Activated CD4-positive, alpha-beta T cell treated with anti-CD3 and anti-CD28 coated beads for 36 hours (primary cell): ENCODE measurements at regions of chr10 and their contacts with region 1.

Region 1: DNA sequence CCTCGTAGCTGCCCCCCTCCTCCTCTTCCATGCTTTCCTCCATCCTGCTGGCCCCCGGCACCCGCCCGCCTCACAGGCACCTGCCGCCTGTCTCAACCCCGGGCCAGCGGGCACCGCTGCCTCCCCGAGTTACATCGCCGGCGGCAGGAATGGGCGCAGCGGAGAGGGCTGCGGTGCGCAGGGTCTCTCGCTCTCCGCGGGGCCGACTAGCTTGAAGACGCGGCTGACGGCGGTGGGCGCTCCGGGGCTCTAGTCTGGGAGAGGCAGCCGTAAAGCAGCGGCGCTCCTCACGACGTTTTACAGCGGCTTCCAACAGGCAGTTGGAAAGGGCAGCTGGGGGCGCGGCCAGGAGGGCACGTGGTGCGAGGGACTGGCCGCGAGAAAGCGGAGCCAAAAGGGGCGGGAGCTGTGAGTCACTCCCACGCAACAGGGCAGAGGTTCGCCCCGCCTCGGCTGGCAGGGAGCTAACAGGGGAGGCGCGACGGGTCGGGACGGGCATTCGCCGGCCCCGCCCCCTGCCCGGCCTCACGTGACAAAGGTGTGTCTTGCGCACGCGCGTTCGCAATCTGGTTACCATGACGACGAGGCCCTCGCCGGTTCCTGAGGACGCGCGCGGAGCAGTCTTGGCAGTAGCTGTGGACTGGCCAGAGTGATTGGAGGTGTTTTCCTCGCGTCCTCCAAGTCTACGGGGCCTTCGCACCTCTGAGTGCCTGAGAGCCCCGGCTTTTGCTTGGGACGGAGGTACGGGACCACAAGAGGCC is at the start of gene CACUL1:
- DNase-seq: peak; percentile 100
- ATAC-seq: peak; percentile 98
- H3K4me3 Mint-ChIP-seq: peak within 1 kb of the TSS; percentile 91
- H3K27ac Mint-ChIP-seq: peak within 1 kb of the TSS; percentile 83
- H3K4me1 Mint-ChIP-seq: peaks cover 33% of the 10 kb centered on the region
- H3K27me3 Mint-ChIP-seq: no peaks in the 10 kb centered on the region
- total RNA-seq, gene CACUL1: 20.1 to 24.4 TPM

Region 2: GRCh38 chr10:118046395-118047156 is 708.3 kb before region 1 on chr10 and contains the start of gene RAB11FIP2:
- CTCF ChIA-PET with region 1: no interaction called
- POLR2A ChIA-PET with region 1: no interaction called
- intact Hi-C with region 1: loop called in 1 of 2 experiments (anchors 2 kb)
- DNase-seq: peak; percentile 97
- ATAC-seq: peak; percentile 94
- H3K4me3 Mint-ChIP-seq: peak within 1 kb of the TSS; percentile 84
- H3K27ac Mint-ChIP-seq: peak within 1 kb of the TSS; percentile 88
- H3K4me1 Mint-ChIP-seq: peaks cover 28% of the 10 kb centered on the region
- H3K27me3 Mint-ChIP-seq: no peaks in the 10 kb centered on the region
- total RNA-seq, gene RAB11FIP2: 9.7 to 12.5 TPM

Region 3: GRCh38 chr10:118720685-118721538 is 34.0 kb before region 1 on chr10:
- CTCF ChIA-PET with region 1: interaction called, 14 read pairs
- POLR2A ChIA-PET with region 1: no interaction called
- intact Hi-C with region 1: no loop called
- DNase-seq: peak; percentile 69
- ATAC-seq: peak; percentile 71
- H3K4me3 Mint-ChIP-seq: no peak overlapping the region
- H3K27ac Mint-ChIP-seq: no peak overlapping the region
- H3K4me1 Mint-ChIP-seq: peaks cover 6% of the 10 kb centered on the region
- H3K27me3 Mint-ChIP-seq: no peaks in the 10 kb centered on the region

Region 4: GRCh38 chr10:119028900-119029612 is 274.2 kb after region 1 on chr10:
- CTCF ChIA-PET with region 1: no interaction called
- POLR2A ChIA-PET with region 1: no interaction called
- intact Hi-C with region 1: loop called in 1 of 2 experiments (anchors 1 kb)
- DNase-seq: peak; percentile 85
- ATAC-seq: peak; percentile 74
- H3K4me3 Mint-ChIP-seq: peak overlapping the region; percentile 47
- H3K27ac Mint-ChIP-seq: no peak overlapping the region
- H3K4me1 Mint-ChIP-seq: peaks cover 16% of the 10 kb centered on the region
- H3K27me3 Mint-ChIP-seq: no peaks in the 10 kb centered on the region

Region 5: GRCh38 chr10:119178372-119179119 is 423.6 kb after region 1 on chr10 and contains the start of gene PRDX3:
- CTCF ChIA-PET with region 1: no interaction called
- POLR2A ChIA-PET with region 1: no interaction called
- intact Hi-C with region 1: loop called in 1 of 2 experiments (anchors 1 kb)
- DNase-seq: peak; percentile 98
- ATAC-seq: peak; percentile 95
- H3K4me3 Mint-ChIP-seq: peak within 1 kb of the TSS; percentile 88
- H3K27ac Mint-ChIP-seq: peak within 1 kb of the TSS; percentile 95
- H3K4me1 Mint-ChIP-seq: peaks cover 36% of the 10 kb centered on the region
- H3K27me3 Mint-ChIP-seq: no peaks in the 10 kb centered on the region
- total RNA-seq, gene PRDX3: 160 to 217 TPM

Region 6: DNA sequence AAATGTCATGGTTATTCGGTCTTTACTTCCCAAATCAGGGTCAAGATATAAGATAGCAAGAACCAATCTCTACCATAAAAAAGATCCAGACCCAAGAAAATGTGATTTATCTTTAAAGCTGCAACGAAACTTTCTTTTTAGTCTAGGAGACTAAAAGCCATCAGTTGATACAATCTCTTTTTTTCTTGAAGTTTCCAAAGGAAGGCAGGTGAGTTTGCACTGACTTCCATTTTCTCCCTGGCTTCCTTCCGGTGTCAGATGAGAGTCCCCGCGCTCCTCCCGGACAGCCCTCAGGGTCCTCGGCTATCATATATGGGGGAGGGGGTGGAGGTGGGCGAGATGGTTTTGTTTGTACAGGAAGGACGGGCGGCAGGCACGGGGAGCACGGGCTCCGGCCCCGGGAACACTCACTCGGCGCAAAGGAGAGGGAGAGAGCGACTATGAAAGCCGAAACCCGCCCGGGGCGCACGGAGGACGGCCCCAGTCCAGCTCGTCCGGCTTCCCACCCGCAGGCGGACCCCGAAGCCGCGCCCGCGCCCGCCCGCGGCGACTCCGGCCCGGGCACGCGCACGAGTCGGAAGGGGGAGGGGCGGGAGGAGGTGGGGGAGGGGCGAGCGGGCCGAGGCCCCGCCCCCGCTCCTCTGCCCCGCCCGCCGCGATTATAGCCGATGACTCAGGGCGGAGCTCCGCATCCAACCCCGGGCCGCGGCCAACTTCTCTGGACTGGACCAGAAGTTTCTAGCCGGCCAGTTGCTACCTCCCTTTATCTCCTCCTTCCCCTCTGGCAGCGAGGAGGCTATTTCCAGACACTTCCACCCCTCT is 896.0 kb after region 1 on chr10 and contains the start of gene BAG3:
- CTCF ChIA-PET with region 1: no interaction called
- POLR2A ChIA-PET with region 1: no interaction called
- intact Hi-C with region 1: loop called in 1 of 2 experiments (anchors 5 kb)
- DNase-seq: peak; percentile 91
- ATAC-seq: peak; percentile 48
- H3K4me3 Mint-ChIP-seq: peak within 1 kb of the TSS; percentile 84
- H3K27ac Mint-ChIP-seq: peak within 1 kb of the TSS; percentile 95
- H3K4me1 Mint-ChIP-seq: peaks cover 39% of the 10 kb centered on the region
- H3K27me3 Mint-ChIP-seq: no peaks in the 10 kb centered on the region
- total RNA-seq, gene BAG3: 23.8 to 30.7 TPM

Region 7: DNA sequence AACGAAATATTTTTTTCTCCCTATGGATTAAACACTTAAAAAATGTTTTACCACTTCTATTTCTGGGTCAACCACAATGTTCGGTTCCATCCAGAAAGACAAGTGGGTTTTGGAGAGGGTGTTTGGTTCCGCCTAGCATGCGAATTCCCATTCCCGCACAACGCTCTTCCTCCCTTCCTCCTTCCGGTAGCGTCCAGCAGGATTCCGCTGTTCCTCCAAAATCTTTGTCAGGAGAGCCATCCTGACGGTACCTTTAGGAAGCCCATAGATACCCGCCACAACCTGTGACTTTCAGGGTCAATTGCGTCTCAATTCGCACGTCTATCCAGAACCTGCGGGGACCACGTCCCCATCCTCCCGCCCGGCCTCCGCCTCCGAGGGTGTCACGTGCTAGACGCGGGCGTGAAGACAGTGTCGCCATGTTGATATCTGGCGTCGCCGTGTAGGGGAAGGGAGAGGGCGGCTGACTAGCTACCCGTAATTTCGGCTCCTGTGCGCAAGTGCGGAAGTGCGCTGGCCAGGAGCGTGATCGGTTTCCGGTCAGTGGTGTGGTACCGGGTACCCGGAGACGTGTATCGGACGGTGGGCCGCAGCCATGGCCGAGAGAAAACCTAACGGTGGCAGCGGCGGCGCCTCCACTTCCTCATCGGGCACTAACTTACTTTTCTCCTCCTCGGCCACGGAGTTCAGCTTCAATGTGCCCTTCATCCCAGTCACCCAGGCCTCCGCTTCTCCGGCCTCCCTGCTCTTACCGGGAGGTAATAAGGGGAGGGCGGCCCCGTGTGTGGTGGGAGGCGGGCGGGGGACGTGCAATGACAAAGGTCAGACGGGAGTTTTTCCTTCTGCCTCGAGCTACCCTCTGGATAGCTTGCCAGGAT is 1137.5 kb after region 1 on chr10 and contains the start of gene SEC23IP:
- CTCF ChIA-PET with region 1: no interaction called
- POLR2A ChIA-PET with region 1: no interaction called
- intact Hi-C with region 1: loop called in 1 of 2 experiments (anchors 5 kb)
- DNase-seq: peak; percentile 96
- ATAC-seq: peak; percentile 100
- H3K4me3 Mint-ChIP-seq: peak within 1 kb of the TSS; percentile 84
- H3K27ac Mint-ChIP-seq: peak within 1 kb of the TSS; percentile 95
- H3K4me1 Mint-ChIP-seq: peaks cover 43% of the 10 kb centered on the region
- H3K27me3 Mint-ChIP-seq: no peaks in the 10 kb centered on the region
- total RNA-seq, gene SEC23IP: 70.3 to 87.2 TPM